CD4-positive, alpha-beta memory T cell (primary cell): ENCODE measurements at regions of chr17 and their contacts with region 1.

Region 1: DNA sequence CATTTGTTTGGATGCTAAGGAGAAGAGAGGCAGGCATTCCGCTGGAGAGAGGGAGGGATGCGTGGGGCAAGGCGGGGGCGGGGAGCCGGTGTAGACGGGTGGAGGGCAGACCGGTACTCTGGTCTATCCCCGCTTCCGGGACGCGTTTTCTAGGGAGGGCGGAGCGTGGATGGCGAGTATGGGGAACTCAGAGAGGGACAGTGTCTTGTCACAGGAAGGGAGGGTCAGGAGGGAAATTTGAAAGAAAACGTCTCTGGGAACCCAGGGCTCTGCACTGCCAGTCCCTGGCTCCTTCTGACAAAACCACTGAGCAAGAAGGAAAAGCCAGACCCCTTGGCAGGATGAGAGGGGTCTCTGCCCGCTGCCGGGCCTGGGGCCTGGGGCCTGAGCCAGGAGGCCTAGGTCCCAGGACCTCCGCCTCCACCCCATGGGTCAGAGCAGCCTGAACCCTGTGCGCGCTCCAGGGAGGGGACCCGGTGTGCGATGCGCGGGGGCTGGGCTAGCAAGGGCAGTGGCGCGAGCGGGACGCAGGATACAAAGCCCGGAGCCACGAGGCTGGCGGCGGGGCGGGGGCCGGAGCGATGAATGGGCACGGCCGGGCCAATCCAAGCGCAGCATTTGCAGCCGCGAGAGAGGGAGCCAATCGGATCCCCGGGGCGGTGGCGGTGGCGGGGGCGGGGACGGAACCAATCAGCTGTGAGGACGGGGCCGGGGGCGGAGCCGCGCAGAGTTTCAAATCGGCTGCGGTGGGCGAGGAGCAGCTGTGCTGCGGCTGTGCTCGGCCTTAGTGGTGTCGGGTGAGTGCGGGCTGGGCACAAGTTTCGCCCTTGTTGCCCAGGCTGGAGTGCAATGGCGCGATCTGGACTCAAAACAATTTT is at the start of gene PIMREG:
- DNase-seq: peak; percentile 82 to 91 (median 83)
- H3K4me3 ChIP-seq: peak within 1 kb of the TSS; percentile 69 to 93
- H3K4me3 Mint-ChIP-seq: peak within 1 kb of the TSS; percentile 91 to 94 (median 92)
- H3K27ac ChIP-seq: peak within 1 kb of the TSS; percentile 17
- H3K27ac Mint-ChIP-seq: peak within 1 kb of the TSS; percentile 68 to 96 (median 87)
- H3K4me1 ChIP-seq: peaks cover 5% of the 10 kb centered on the region
- H3K4me1 Mint-ChIP-seq: peaks cover 9 to 16% (median 12%) of the 10 kb centered on the region in 4 donors
- H3K27me3 ChIP-seq: no peaks in the 10 kb centered on the region
- H3K27me3 Mint-ChIP-seq: peaks cover 6 to 8% of the 10 kb centered on the region in 2 donors
- total RNA-seq, gene PIMREG: not detected

Region 2: GRCh38 chr17:6454957-6455705 is 11.2 kb after region 1 on chr17:
- CTCF ChIA-PET with region 1: no interaction called
- POLR2A ChIA-PET with region 1: interaction called, 12 read pairs
- intact Hi-C with region 1: no loop called
- DNase-seq: peak; percentile 38 to 56 (median 53)
- H3K4me3 ChIP-seq: no peak overlapping the region
- H3K4me3 Mint-ChIP-seq: peak overlapping the region; percentile 37 to 65 (median 60)
- H3K27ac ChIP-seq: no peak overlapping the region
- H3K27ac Mint-ChIP-seq: peak overlapping the region in 2 of 7 donors; percentile 80 to 84
- H3K4me1 ChIP-seq: peaks cover 6% of the 10 kb centered on the region
- H3K4me1 Mint-ChIP-seq: peaks cover 5 to 32% (median 14%) of the 10 kb centered on the region in 4 donors
- H3K27me3 ChIP-seq: no peaks in the 10 kb centered on the region
- H3K27me3 Mint-ChIP-seq: no peaks in the 10 kb centered on the region

Region 3: GRCh38 chr17:6651357-6651918 is 207.5 kb after region 1 on chr17 and contains the starts of genes C17orf100 and MED31:
- CTCF ChIA-PET with region 1: no interaction called
- POLR2A ChIA-PET with region 1: no interaction called
- intact Hi-C with region 1: loop called (anchors 10 kb)
- DNase-seq: peak; percentile 93 to 96 (median 95)
- H3K4me3 ChIP-seq: peak within 1 kb of the TSS; percentile 80 to 83
- H3K4me3 Mint-ChIP-seq: peak within 1 kb of the TSS; percentile 96 to 100 (median 99)
- H3K27ac ChIP-seq: peak within 1 kb of the TSS; percentile 99
- H3K27ac Mint-ChIP-seq: peak within 1 kb of the TSS; percentile 99 to 100 (median 100)
- H3K4me1 ChIP-seq: peaks cover 50% of the 10 kb centered on the region
- H3K4me1 Mint-ChIP-seq: peaks cover 36 to 82% (median 61%) of the 10 kb centered on the region in 4 donors
- H3K27me3 ChIP-seq: no peaks in the 10 kb centered on the region
- H3K27me3 Mint-ChIP-seq: no peaks in the 10 kb centered on the region
- total RNA-seq, gene C17orf100: 4.0 to 4.3 TPM
- total RNA-seq, gene MED31: 30.8 to 35.8 TPM